G401 (cell line): ENCODE measurements at regions of chr10 and their contacts with region 1.

Region 1: GRCh38 chr10:73965890-73966768 is 31.8 kb upstream of the VCL start:
- DNase-seq: peak; percentile 89

Region 2: GRCh38 chr10:73920089-73920488 is 46.0 kb before region 1 on chr10:
- in situ Hi-C with region 1: no loop called
- DNase-seq: peak; percentile 31

Region 3: GRCh38 chr10:74011770-74012169 is 45.6 kb after region 1 on chr10:
- in situ Hi-C with region 1: loop called (anchors 5 kb)
- DNase-seq: no peak